CD8-positive, alpha-beta memory T cell (primary cell): ENCODE measurements at regions of chr16 and their contacts with region 1.

Region 1: DNA sequence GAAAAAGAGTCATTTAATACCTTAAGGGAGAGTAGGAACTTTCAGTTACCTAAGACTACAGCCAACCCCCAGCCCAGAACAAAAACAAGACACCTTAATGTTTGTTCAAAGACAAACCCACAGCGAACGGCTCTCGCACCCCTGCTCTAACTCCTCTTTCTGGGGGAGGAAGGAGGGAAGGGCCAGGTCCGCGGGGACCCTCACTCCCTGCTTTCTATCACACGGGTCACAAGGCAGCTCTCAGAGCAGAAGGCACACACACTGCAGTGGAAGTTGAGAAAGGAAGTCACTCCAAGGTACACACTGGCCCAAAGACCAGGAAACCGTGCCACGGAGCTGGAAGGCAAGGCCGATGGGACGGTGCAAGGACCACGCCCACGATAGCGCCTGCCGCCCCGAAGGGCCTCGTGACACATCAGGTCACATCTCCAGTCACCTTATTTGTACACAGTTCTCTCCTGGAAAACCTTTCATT is 10.0 kb downstream of the LITAFD start:
- DNase-seq: no peak
- H3K4me3 ChIP-seq: no peak overlapping the region
- H3K4me3 Mint-ChIP-seq: peak overlapping the region in 5 of 7 donors; percentile 41 to 68 (median 57)
- H3K27ac ChIP-seq: no peak overlapping the region
- H3K27ac Mint-ChIP-seq: peak overlapping the region; percentile 75 to 95 (median 87)
- H3K4me1 ChIP-seq: no peaks in the 10 kb centered on the region
- H3K4me1 Mint-ChIP-seq: peaks cover 11 to 32% (median 23%) of the 10 kb centered on the region in 3 donors
- H3K27me3 ChIP-seq: no peaks in the 10 kb centered on the region
- H3K27me3 Mint-ChIP-seq: peaks cover 0 to 1% of the 10 kb centered on the region in 2 donors

Region 2: DNA sequence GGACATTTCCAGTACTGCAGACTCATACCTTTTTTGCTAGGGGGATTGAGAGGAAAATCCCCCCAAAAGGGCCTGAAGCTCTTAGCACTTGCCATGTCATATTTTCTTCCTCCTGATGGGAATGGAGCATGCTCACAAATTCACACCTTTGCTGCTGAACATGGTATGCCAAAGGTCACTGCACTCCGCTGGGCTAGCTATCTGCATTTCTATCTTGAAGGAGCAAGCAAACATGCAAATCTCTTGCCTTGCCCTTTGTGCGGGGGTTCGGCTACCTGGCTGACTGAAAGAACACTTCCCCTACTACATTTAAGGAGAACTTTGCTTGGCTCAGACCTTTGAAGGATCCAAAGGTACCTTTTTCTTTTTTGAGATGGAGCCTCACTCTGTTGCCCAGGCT is 199.6 kb before region 1 on chr16:
- CTCF ChIA-PET with region 1: no interaction called
- POLR2A ChIA-PET with region 1: no interaction called
- DNase-seq: no peak
- H3K4me3 ChIP-seq: no peak overlapping the region
- H3K4me3 Mint-ChIP-seq: no peak overlapping the region
- H3K27ac ChIP-seq: no peak overlapping the region
- H3K27ac Mint-ChIP-seq: no peak overlapping the region
- H3K4me1 ChIP-seq: no peaks in the 10 kb centered on the region
- H3K4me1 Mint-ChIP-seq: no peaks in the 10 kb centered on the region
- H3K27me3 ChIP-seq: no peaks in the 10 kb centered on the region
- H3K27me3 Mint-ChIP-seq: no peaks in the 10 kb centered on the region

Region 3: DNA sequence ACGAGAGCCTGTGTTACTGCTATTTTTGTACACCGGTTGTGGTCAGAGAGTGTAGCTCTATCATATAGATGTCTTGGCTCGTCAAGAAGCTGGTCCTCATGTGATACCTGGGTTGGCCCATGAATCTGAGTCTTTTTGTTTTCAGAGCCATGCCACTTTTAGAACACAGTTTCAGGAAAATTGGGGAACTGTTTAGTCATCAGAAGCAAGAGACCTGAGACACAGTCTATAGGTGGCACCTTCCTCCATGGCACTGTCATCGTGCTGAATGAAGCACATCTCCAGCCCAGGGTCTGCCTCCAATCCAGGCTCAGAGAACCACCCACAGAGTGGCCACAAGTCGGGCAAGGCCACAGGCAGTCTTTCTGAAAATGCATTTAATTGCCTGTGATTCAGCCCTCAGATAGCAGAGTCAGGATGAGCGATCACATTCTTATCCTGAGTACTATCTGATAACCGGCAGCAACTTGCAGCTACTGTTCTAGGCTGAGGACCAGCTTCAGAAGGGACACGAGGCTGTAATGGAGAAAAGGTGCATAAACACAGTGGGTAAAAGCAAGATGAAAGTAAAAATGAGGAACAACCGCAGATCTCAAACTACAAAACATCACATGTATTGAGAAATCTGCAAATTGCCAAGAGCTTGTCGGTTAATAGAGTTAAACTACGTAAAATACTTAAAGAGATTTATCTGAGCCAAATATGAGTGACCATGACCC is 185.1 kb after region 1 on chr16:
- CTCF ChIA-PET with region 1: no interaction called
- POLR2A ChIA-PET with region 1: interaction called, 10 read pairs
- DNase-seq: no peak
- H3K4me3 ChIP-seq: no peak overlapping the region
- H3K4me3 Mint-ChIP-seq: peak overlapping the region in 1 of 7 donors; percentile 16
- H3K27ac ChIP-seq: peak overlapping the region; percentile 59
- H3K27ac Mint-ChIP-seq: peak overlapping the region in 1 of 8 donors; percentile 42
- H3K4me1 ChIP-seq: peaks cover 19% of the 10 kb centered on the region
- H3K4me1 Mint-ChIP-seq: peaks cover 14 to 27% (median 27%) of the 10 kb centered on the region in 3 donors
- H3K27me3 ChIP-seq: no peaks in the 10 kb centered on the region
- H3K27me3 Mint-ChIP-seq: peaks cover 3 to 4% of the 10 kb centered on the region in 2 donors